Ovary (tissue), 10 donors: ENCODE measurements at regions of chr15 and their contacts with region 1.

Region 1: DNA sequence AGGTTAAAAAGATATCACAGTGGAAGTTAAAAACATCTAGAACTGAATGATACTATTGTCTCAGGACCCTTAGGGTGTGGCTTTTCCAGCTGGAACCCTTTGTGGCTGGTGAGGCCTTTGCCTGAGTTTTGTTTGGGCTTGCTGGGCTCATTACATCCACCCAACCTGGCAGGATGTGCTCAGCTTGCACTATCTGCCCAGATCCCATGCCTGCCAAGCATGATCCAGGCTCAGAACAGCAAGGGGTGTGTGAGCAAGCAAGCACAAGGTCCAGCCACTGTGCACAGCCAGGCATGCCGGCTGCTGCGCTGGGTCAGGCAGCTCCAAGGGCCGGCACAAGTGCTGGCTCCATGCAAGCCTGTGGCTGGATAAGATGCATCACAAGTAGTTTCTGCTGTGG is 512.7 kb upstream of the CDIN1 start:
- DNase-seq: no peak
- H3K4me3 ChIP-seq: no peak overlapping the region
- H3K27ac ChIP-seq: no peak overlapping the region
- H3K4me1 ChIP-seq: no peaks in the 10 kb centered on the region
- H3K27me3 ChIP-seq: no peaks in the 10 kb centered on the region
- CTCF ChIP-seq: no peak
- EP300 ChIP-seq: no peak
- POLR2A ChIP-seq: no peak

Region 2: DNA sequence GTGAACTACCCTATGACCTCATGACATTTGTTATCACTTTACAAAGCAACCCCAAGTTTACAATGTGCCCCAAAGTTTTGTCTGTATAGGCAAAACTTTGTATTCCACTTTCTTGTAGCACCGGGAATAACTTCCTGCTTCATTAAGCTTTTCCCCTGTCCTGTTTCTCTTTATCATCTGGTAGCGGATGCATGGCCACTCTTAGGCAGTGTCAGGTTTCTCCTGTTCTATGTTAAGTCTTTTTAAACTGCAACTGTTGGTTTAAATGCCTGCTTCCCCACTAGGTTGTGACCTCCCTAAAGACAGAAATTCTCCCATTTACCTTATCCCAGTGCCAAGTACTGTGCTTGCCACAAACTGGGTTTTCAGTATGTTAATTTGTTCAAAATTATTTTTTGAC is 87.1 kb before region 1 on chr15:
- intact Hi-C with region 1: loop called in 1 of 4 experiments (anchors 10 kb)
- DNase-seq: no peak
- H3K4me3 ChIP-seq: no peak overlapping the region
- H3K27ac ChIP-seq: no peak overlapping the region
- H3K4me1 ChIP-seq: no peaks in the 10 kb centered on the region
- H3K27me3 ChIP-seq: no peaks in the 10 kb centered on the region
- CTCF ChIP-seq: no peak
- EP300 ChIP-seq: no peak
- POLR2A ChIP-seq: no peak